CD4-positive, alpha-beta memory T cell (primary cell): ENCODE measurements at regions of chr17 and their contacts with region 1.

Region 1: DNA sequence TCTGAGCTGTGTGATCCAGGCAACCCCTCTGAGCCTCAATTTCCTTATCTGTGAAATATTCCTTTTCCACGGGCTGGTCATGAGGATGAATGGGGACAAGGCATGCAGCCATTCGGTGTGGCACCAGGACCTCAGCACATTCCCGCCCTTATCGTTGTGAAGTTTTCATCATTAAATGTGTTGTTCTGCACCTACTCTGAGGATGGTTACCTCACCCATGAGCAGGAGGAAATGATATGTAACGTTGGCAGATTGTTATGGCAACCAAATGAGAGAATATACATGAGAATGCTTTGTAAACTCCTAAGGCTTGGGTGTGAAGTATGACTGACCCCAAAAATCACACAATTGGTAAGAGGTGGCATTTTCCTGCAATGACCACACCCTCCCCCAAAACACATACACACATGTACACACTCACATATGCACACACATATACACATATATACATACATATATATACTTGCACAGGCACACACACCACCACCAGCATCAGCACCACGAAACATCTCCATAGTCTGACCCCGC is 39.5 kb downstream of the SMARCE1 start:
- DNase-seq: peak; percentile 79 to 88 (median 82)
- H3K4me3 ChIP-seq: peak overlapping the region; percentile 14 to 43
- H3K4me3 Mint-ChIP-seq: peak overlapping the region; percentile 74 to 90 (median 78)
- H3K27ac ChIP-seq: peak overlapping the region; percentile 97
- H3K27ac Mint-ChIP-seq: peak overlapping the region; percentile 94 to 100 (median 100)
- H3K4me1 ChIP-seq: peaks cover 99% of the 10 kb centered on the region
- H3K4me1 Mint-ChIP-seq: peaks cover 71 to 98% (median 86%) of the 10 kb centered on the region in 4 donors
- H3K27me3 ChIP-seq: no peaks in the 10 kb centered on the region
- H3K27me3 Mint-ChIP-seq: no peaks in the 10 kb centered on the region

Region 2: GRCh38 chr17:40542558-40543411 is 65.3 kb before region 1 on chr17:
- CTCF ChIA-PET with region 1: interaction called, 3 read pairs
- POLR2A ChIA-PET with region 1: interaction called, 1,226 read pairs
- intact Hi-C with region 1: no loop called
- DNase-seq: peak in 4 of 5 donors; percentile 37 to 82 (median 50)
- H3K4me3 ChIP-seq: no peak overlapping the region
- H3K4me3 Mint-ChIP-seq: peak overlapping the region in 6 of 8 donors; percentile 67 to 94 (median 88)
- H3K27ac ChIP-seq: peak overlapping the region; percentile 69
- H3K27ac Mint-ChIP-seq: peak overlapping the region; percentile 94 to 100 (median 99)
- H3K4me1 ChIP-seq: peaks cover 90% of the 10 kb centered on the region
- H3K4me1 Mint-ChIP-seq: peaks cover 60 to 91% (median 75%) of the 10 kb centered on the region in 4 donors
- H3K27me3 ChIP-seq: no peaks in the 10 kb centered on the region
- H3K27me3 Mint-ChIP-seq: peaks cover 0 to 4% of the 10 kb centered on the region in 2 donors

Region 3: GRCh38 chr17:40582328-40582901 is 25.7 kb before region 1 on chr17:
- CTCF ChIA-PET with region 1: interaction called, 18 read pairs
- POLR2A ChIA-PET with region 1: interaction called, 63 read pairs
- intact Hi-C with region 1: loop called (anchors 1 kb)
- DNase-seq: peak; percentile 74 to 78 (median 76)
- H3K4me3 ChIP-seq: peak overlapping the region; percentile 28 to 34
- H3K4me3 Mint-ChIP-seq: peak overlapping the region; percentile 32 to 84 (median 80)
- H3K27ac ChIP-seq: peak overlapping the region; percentile 47
- H3K27ac Mint-ChIP-seq: peak overlapping the region; percentile 75 to 96 (median 95)
- H3K4me1 ChIP-seq: peaks cover 72% of the 10 kb centered on the region
- H3K4me1 Mint-ChIP-seq: peaks cover 57 to 95% (median 78%) of the 10 kb centered on the region in 4 donors
- H3K27me3 ChIP-seq: no peaks in the 10 kb centered on the region
- H3K27me3 Mint-ChIP-seq: no peaks in the 10 kb centered on the region